PC-9 (cell line): ENCODE measurements at regions of chr9 and their contacts with region 1.

Region 1: GRCh38 chr9:32442433-32442832 is 58.0 kb downstream of the ACO1 start:
- DNase-seq: no peak
- H3K4me3 ChIP-seq: no peak overlapping the region
- H3K27ac ChIP-seq: no peak overlapping the region
- H3K4me1 ChIP-seq: no peaks in the 10 kb centered on the region
- H3K27me3 ChIP-seq: no peaks in the 10 kb centered on the region
- CTCF ChIP-seq: no peak

Region 2: GRCh38 chr9:32371279-32371678 is 71.2 kb before region 1 on chr9:
- CTCF ChIA-PET with region 1: no interaction called
- POLR2A ChIA-PET with region 1: no interaction called
- intact Hi-C with region 1: no loop called
- DNase-seq: no peak
- H3K4me3 ChIP-seq: no peak overlapping the region
- H3K27ac ChIP-seq: no peak overlapping the region
- H3K4me1 ChIP-seq: no peaks in the 10 kb centered on the region
- H3K27me3 ChIP-seq: no peaks in the 10 kb centered on the region
- CTCF ChIP-seq: no peak

Region 3: GRCh38 chr9:32456564-32456963 is 14.1 kb after region 1 on chr9:
- CTCF ChIA-PET with region 1: no interaction called
- POLR2A ChIA-PET with region 1: interaction called, 12 read pairs
- intact Hi-C with region 1: no loop called
- DNase-seq: no peak
- H3K4me3 ChIP-seq: no peak overlapping the region
- H3K27ac ChIP-seq: no peak overlapping the region
- H3K4me1 ChIP-seq: no peaks in the 10 kb centered on the region
- H3K27me3 ChIP-seq: no peaks in the 10 kb centered on the region
- CTCF ChIP-seq: no peak